IMR-90 (cell line): ENCODE measurements at regions of chr1 and their contacts with region 1.

Region 1: GRCh38 chr1:55848906-55849305 is 633.7 kb upstream of the USP24 start:
- DNase-seq: peak; percentile 73
- ATAC-seq: peak; percentile 66
- H3K4me3 ChIP-seq: no peak overlapping the region
- H3K27ac ChIP-seq: no peak overlapping the region
- H3K4me1 ChIP-seq: no peaks in the 10 kb centered on the region
- H3K27me3 ChIP-seq: no peaks in the 10 kb centered on the region
- CTCF ChIP-seq: peak; percentile 56
- POLR2A ChIP-seq: no peak
- RAD21 ChIP-seq: peak; percentile 75

Region 2: GRCh38 chr1:55584526-55585401 is 264.1 kb before region 1 on chr1:
- CTCF ChIA-PET with region 1: interaction called, 3 read pairs
- POLR2A ChIA-PET with region 1: no interaction called
- dilution Hi-C with region 1: no loop called
- in situ Hi-C with region 1: no loop called
- intact Hi-C with region 1: loop called (anchors 5 kb)
- DNase-seq: peak; percentile 44
- ATAC-seq: peak; percentile 41; the same call in 1 of the 2 replicates
- H3K4me3 ChIP-seq: no peak overlapping the region
- H3K27ac ChIP-seq: peak overlapping the region; percentile 72; the same call in 1 of the 2 replicates
- H3K4me1 ChIP-seq: peaks cover 11% of the 10 kb centered on the region
- H3K27me3 ChIP-seq: no peaks in the 10 kb centered on the region
- CTCF ChIP-seq: peak; percentile 34
- POLR2A ChIP-seq: no peak
- RAD21 ChIP-seq: no peak

Region 3: DNA sequence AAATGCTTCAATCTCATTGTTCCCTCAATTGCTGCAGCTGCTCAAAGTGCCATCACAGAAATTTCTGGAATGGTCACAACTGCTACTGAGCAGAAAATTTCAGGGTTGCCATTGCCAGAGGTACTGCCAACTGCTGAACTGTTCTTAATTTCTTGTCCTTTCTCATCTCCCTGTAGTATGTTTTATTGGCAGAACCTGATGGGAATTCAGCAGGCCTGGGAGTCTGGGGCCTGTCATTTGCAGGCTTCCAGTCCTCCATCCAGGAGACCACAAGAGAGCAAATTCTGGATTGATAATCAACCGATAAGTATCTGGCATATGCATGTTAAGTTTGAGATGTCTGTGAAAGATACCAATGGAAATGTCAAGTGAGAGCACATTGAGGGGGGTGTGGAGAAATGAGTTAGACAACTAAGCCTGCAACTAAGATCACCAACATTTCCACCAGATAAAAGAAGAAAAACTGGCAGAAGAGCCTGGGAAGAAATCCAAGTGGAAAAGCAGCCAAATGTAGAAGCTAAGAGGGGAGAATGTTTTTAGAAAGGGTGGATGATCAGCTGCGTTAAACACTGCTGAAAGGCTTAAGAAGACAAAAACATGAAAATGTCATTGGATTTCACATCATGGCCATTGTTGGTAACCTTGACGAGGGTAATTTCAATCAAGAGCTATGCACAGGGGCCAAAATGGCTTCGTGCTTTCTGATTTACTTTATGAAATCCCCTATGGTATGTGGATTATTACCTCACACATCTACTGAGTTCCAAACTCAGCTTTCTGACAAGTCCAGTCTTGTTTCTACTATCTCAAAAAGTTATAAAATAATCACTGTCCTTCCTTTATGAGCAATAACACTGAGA is 82.4 kb after region 1 on chr1:
- CTCF ChIA-PET with region 1: no interaction called
- POLR2A ChIA-PET with region 1: no interaction called
- dilution Hi-C with region 1: no loop called
- in situ Hi-C with region 1: no loop called
- intact Hi-C with region 1: no loop called
- DNase-seq: peak; percentile 35
- ATAC-seq: peak; percentile 78
- H3K4me3 ChIP-seq: no peak overlapping the region
- H3K27ac ChIP-seq: peak overlapping the region; percentile 73; the same call in 1 of the 2 replicates
- H3K4me1 ChIP-seq: peaks cover 9% of the 10 kb centered on the region
- H3K27me3 ChIP-seq: no peaks in the 10 kb centered on the region
- CTCF ChIP-seq: no peak
- POLR2A ChIP-seq: no peak
- RAD21 ChIP-seq: no peak